ENCODE measurements at regions of chr19 and their contacts with region 1.

Region 1: DNA sequence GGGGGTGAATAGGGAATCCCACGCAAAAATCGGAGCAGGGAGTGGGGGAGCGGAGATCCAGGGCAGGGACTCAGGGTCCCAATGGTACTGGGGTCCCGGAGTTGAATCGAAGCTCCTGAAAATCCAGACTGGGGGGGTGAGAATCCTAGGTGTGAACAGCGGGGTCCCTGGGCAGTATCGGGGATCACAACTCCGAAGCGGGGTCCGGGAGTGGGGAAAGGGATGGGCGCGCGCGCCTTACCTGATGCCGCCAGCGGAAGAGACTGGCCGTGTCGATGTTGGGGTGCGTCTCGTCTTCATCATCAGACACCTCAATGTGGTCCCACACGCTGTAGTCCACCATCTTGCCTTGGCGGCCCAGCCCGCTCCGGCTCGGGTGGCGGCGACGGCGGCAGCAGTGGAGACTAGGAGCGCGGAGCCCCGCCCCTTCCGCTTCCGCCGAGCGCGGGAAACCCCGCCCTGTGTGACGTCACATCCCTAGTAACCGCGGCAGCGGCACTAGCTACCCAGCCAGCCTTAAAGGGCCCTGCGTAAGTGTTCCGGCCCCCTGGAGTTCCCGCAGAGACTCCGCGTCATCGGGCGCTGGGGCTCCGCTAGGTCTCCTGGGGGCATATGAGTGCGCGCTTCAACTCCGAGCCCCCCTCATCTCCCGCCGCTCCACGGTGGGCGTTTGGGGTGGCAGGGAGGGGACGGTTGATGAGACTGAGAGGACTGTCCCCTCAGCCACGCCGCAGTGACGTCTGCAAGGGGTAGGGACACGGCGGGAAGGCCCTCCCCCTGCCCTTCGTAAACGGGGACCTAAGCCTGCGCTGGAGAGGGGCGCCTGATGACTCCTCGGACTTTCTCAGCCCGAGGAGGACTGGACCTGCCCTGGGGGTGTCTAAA is at the start of gene CDC37:
- DNase-seq: peak; percentile 99
- ATAC-seq: peak; percentile 74
- H3K4me3 Mint-ChIP-seq: peak within 1 kb of the TSS; percentile 95
- H3K27ac Mint-ChIP-seq: peak within 1 kb of the TSS; percentile 78
- H3K4me1 Mint-ChIP-seq: peaks cover 63% of the 10 kb centered on the region
- H3K27me3 Mint-ChIP-seq: no peaks in the 10 kb centered on the region
- CTCF ChIP-seq: no peak
- total RNA-seq, gene CDC37: 236 to 238 TPM

Region 2: GRCh38 chr19:10259162-10259905 is 144.0 kb before region 1 on chr19:
- CTCF ChIA-PET with region 1: interaction called, 24 read pairs
- POLR2A ChIA-PET with region 1: interaction called, 4 read pairs
- intact Hi-C with region 1: no loop called
- DNase-seq: peak; percentile 100
- ATAC-seq: peak; percentile 80
- H3K4me3 Mint-ChIP-seq: peak overlapping the region; percentile 24
- H3K27ac Mint-ChIP-seq: peak overlapping the region; percentile 92
- H3K4me1 Mint-ChIP-seq: peaks cover 33% of the 10 kb centered on the region
- H3K27me3 Mint-ChIP-seq: no peaks in the 10 kb centered on the region
- CTCF ChIP-seq: peak; percentile 77

Region 3: DNA sequence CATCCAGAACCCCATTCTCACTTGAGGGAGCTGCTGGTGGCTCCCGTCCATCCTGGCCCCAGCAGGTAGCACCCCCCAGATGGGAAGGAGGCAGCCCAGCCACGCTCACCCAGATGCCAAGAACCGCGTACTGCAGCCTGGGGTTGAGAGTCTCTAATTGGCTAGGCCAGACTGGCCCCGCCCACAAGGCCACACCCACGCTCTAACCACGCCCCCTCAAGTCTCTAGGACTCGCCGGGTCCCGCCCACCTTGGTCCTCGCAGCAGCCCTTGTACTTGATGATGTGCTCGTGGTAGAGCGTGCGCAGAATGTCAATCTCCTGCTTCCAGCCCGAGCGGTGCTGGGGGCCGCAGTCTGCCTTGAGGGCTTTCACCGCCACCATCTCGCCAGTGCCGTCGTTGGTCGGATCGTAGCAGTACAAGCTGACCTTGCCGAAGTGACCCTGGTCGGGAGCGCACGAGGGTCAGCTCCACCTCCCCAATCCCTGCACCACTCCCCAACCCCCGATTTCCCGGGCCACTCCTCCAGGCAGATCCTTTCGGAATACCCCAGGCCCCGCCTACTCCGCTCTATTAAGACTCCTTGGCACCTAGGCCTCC is 49.5 kb before region 1 on chr19:
- CTCF ChIA-PET with region 1: no interaction called
- POLR2A ChIA-PET with region 1: no interaction called
- intact Hi-C with region 1: no loop called
- DNase-seq: peak; percentile 71
- ATAC-seq: peak; percentile 80
- H3K4me3 Mint-ChIP-seq: no peak overlapping the region
- H3K27ac Mint-ChIP-seq: no peak overlapping the region
- H3K4me1 Mint-ChIP-seq: no peaks in the 10 kb centered on the region
- H3K27me3 Mint-ChIP-seq: no peaks in the 10 kb centered on the region
- CTCF ChIP-seq: no peak

Region 4: DNA sequence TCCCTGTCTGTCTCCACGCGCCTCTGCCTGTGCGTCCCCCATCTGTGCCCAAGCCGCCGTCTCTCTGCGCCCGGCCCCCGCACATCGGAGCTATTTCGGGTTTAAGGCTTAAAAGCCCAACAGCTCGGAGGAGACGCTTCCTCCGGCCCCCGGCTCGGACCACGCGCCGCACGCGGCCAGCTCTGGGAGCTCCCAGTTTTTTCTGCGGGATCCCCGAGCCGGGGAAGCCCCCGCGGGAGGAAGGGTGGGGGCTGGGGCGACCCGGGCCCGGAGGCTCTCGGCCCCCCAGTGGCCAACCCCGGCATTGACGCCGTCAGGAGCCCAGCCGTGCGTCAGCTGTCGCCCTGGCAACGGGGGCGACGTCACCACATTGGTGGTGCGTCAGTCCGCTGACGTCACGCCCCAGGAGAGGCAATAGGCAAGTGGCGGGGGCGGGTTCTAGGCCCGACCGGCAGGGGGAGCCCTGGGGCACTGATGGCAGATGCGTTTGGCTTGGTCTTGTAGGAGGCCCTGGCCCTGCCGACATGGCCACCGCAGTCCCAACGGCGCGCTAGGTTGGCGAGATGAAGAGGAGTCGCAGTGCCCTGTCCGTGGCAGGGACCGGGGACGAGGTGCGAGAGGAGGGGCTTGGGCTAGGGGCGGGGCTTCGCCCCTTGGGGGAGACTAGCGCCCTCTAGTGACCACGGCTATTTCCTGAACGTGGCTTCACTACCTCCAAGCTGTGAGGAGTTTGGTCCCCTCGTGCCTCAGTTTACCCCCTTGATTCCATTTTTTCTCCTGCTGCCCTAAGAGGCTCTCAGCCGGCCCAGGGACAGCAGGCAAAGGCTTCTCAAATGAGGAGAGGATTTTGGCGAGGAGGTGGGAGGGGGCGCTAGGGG is 13.2 kb after region 1 on chr19:
- CTCF ChIA-PET with region 1: interaction called, 587 read pairs
- POLR2A ChIA-PET with region 1: interaction called, 161 read pairs
- intact Hi-C with region 1: loop called (anchors 2 kb)
- DNase-seq: peak; percentile 97
- ATAC-seq: peak; percentile 50
- H3K4me3 Mint-ChIP-seq: peak overlapping the region; percentile 63
- H3K27ac Mint-ChIP-seq: peak overlapping the region; percentile 84
- H3K4me1 Mint-ChIP-seq: peaks cover 59% of the 10 kb centered on the region
- H3K27me3 Mint-ChIP-seq: peaks cover 13% of the 10 kb centered on the region
- CTCF ChIP-seq: peak; percentile 100

Region 5: GRCh38 chr19:10424011-10424637 is 20.7 kb after region 1 on chr19:
- CTCF ChIA-PET with region 1: interaction called, 587 read pairs
- POLR2A ChIA-PET with region 1: interaction called, 161 read pairs
- intact Hi-C with region 1: loop called (anchors 2 kb)
- DNase-seq: peak; percentile 83
- ATAC-seq: peak; percentile 10
- H3K4me3 Mint-ChIP-seq: peak overlapping the region; percentile 71
- H3K27ac Mint-ChIP-seq: peak overlapping the region; percentile 97
- H3K4me1 Mint-ChIP-seq: peaks cover 76% of the 10 kb centered on the region
- H3K27me3 Mint-ChIP-seq: peaks cover 22% of the 10 kb centered on the region
- CTCF ChIP-seq: peak; percentile 97

Region 6: GRCh38 chr19:10431943-10432735 is 28.8 kb after region 1 on chr19:
- CTCF ChIA-PET with region 1: interaction called, 587 read pairs
- POLR2A ChIA-PET with region 1: interaction called, 25 read pairs
- intact Hi-C with region 1: loop called (anchors 2 kb)
- DNase-seq: peak; percentile 73
- ATAC-seq: peak; percentile 35
- H3K4me3 Mint-ChIP-seq: peak overlapping the region; percentile 70
- H3K27ac Mint-ChIP-seq: peak overlapping the region; percentile 81
- H3K4me1 Mint-ChIP-seq: peaks cover 57% of the 10 kb centered on the region
- H3K27me3 Mint-ChIP-seq: peaks cover 30% of the 10 kb centered on the region
- CTCF ChIP-seq: no peak

Region 7: GRCh38 chr19:10478903-10479384 is 75.6 kb after region 1 on chr19:
- CTCF ChIA-PET with region 1: interaction called, 13 read pairs
- POLR2A ChIA-PET with region 1: no interaction called
- intact Hi-C with region 1: loop called (anchors 10 kb)
- DNase-seq: peak; percentile 95
- ATAC-seq: peak; percentile 97
- H3K4me3 Mint-ChIP-seq: peak overlapping the region; percentile 44
- H3K27ac Mint-ChIP-seq: no peak overlapping the region
- H3K4me1 Mint-ChIP-seq: peaks cover 9% of the 10 kb centered on the region
- H3K27me3 Mint-ChIP-seq: no peaks in the 10 kb centered on the region
- CTCF ChIP-seq: peak; percentile 92